Activated CD8-positive, alpha-beta T cell treated with anti-CD3 and anti-CD28 coated beads for 36 hours (primary cell): ENCODE measurements at regions of chr3 and their contacts with region 1.

Region 1: GRCh38 chr3:12706504-12707253 is 42.8 kb upstream of the RAF1 start:
- DNase-seq: peak; percentile 75
- ATAC-seq: peak; percentile 99
- H3K4me3 Mint-ChIP-seq: no peak overlapping the region
- H3K27ac Mint-ChIP-seq: no peak overlapping the region
- H3K4me1 Mint-ChIP-seq: peaks cover 2% of the 10 kb centered on the region
- H3K27me3 Mint-ChIP-seq: no peaks in the 10 kb centered on the region
- CTCF ChIP-seq: peak; percentile 81

Region 2: GRCh38 chr3:12643010-12643380 is 63.7 kb before region 1 on chr3:
- CTCF ChIA-PET with region 1: no interaction called
- POLR2A ChIA-PET with region 1: no interaction called
- intact Hi-C with region 1: no loop called
- DNase-seq: no peak
- ATAC-seq: no peak
- H3K4me3 Mint-ChIP-seq: no peak overlapping the region
- H3K27ac Mint-ChIP-seq: peak overlapping the region; percentile 55
- H3K4me1 Mint-ChIP-seq: peaks cover 48% of the 10 kb centered on the region
- H3K27me3 Mint-ChIP-seq: no peaks in the 10 kb centered on the region
- CTCF ChIP-seq: no peak

Region 3: GRCh38 chr3:12695916-12696315 is 10.8 kb before region 1 on chr3:
- CTCF ChIA-PET with region 1: interaction called, 11 read pairs
- POLR2A ChIA-PET with region 1: no interaction called
- intact Hi-C with region 1: no loop called
- DNase-seq: no peak
- ATAC-seq: no peak
- H3K4me3 Mint-ChIP-seq: no peak overlapping the region
- H3K27ac Mint-ChIP-seq: no peak overlapping the region
- H3K4me1 Mint-ChIP-seq: no peaks in the 10 kb centered on the region
- H3K27me3 Mint-ChIP-seq: no peaks in the 10 kb centered on the region
- CTCF ChIP-seq: no peak

Region 4: GRCh38 chr3:12719984-12720898 is 13.6 kb after region 1 on chr3:
- CTCF ChIA-PET with region 1: interaction called, 13 read pairs
- POLR2A ChIA-PET with region 1: no interaction called
- intact Hi-C with region 1: no loop called
- DNase-seq: peak; percentile 79
- ATAC-seq: peak; percentile 96
- H3K4me3 Mint-ChIP-seq: no peak overlapping the region
- H3K27ac Mint-ChIP-seq: peak overlapping the region; percentile 25
- H3K4me1 Mint-ChIP-seq: peaks cover 10% of the 10 kb centered on the region
- H3K27me3 Mint-ChIP-seq: no peaks in the 10 kb centered on the region
- CTCF ChIP-seq: peak; percentile 94

Region 5: GRCh38 chr3:12782172-12782815 is 75.6 kb after region 1 on chr3:
- CTCF ChIA-PET with region 1: interaction called, 10 read pairs
- POLR2A ChIA-PET with region 1: no interaction called
- intact Hi-C with region 1: no loop called
- DNase-seq: peak; percentile 34
- ATAC-seq: no peak
- H3K4me3 Mint-ChIP-seq: no peak overlapping the region
- H3K27ac Mint-ChIP-seq: no peak overlapping the region
- H3K4me1 Mint-ChIP-seq: no peaks in the 10 kb centered on the region
- H3K27me3 Mint-ChIP-seq: peaks cover 10% of the 10 kb centered on the region
- CTCF ChIP-seq: no peak